Pancreas (tissue), 10 donors: ENCODE measurements at regions of chr14 and their contacts with region 1.

Region 1: DNA sequence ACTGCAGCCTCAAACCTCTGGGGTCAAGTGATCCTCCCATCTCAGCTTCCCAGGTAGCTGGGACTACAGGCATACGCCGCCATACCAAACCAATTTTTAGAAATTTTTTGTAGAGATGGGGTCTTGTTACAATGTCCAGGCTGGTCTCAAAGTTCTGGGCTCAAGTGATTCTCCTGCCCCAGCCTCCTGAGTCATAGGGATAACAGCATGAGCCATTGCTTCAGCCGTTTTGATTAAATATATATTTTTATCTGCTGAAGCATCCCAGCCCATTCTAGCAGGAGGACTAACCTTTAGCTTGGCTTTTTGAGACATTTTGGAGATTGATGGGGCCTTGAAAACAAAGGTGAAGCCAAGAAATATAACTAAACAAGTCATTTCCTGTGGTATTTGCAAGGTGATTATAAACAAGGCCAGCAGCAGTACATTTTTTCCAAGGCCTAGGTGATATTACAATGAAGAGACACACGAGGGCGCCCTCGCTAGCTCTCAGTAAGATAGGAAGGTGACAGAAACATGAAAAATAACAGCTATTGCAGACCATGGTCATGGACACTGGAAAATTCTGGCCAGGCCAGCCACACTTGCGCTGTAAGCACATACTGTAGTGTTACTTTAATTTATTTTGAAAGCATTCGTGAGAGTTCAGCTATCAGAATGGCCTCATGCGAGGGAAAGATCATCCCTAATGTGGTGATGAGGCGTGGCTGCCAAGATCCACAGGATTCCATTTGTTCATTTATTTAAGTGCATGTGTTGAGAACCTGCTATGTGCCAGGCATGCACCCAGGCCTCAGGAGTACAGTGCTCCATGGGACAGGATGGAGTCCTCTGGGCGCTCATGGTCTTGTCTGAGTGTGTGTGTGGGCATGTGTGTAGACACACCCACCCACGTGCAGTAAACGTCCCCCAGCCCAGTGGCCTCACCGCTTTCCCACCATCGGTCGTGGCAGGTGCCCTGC is 63.5 kb downstream of the DGLUCY start:
- DNase-seq: peak in 2 of 6 donors; percentile 19 to 58
- ATAC-seq: peak; percentile 40 to 87 (median 78)
- H3K4me3 ChIP-seq: no peak overlapping the region
- H3K27ac ChIP-seq: no peak overlapping the region
- H3K4me1 ChIP-seq: no peaks in the 10 kb centered on the region
- H3K27me3 ChIP-seq: no peaks in the 10 kb centered on the region
- CTCF ChIP-seq: peak; percentile 52 to 67 (median 60)

Region 2: DNA sequence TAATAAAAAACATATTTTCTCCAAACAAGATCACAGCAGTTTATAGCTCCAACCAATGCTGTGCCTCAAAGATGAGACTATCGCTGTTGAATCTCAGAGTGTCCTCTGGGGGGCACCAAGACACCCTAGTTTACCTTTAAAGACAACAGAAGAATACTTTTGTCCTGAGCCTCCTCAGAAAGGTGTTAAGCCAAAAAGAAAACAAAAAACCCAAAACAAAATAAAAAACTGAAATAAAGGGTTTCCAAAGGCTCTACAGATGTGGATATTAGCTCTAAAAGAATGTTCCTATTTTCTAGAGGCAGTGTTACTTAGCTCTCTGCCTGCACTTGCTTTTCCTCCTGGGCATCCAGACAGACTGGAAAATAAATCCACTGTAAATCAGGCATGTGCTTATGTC is 274.3 kb before region 1 on chr14:
- intact Hi-C with region 1: loop called in 2 of 3 experiments (anchors 5 to 10 kb)
- DNase-seq: peak in 3 of 6 donors; percentile 11 to 54 (median 30)
- ATAC-seq: peak; percentile 58 to 93 (median 90)
- H3K4me3 ChIP-seq: no peak overlapping the region
- H3K27ac ChIP-seq: no peak overlapping the region
- H3K4me1 ChIP-seq: no peaks in the 10 kb centered on the region
- H3K27me3 ChIP-seq: no peaks in the 10 kb centered on the region
- CTCF ChIP-seq: peak in 3 of 4 donors; percentile 41 to 54 (median 52)